BJ (cell line): ENCODE measurements at regions of chr7 and their contacts with region 1.

Region 1: GRCh38 chr7:132557489-132558044 is 18.7 kb downstream of the PLXNA4 start:
- DNase-seq: no peak
- H3K4me3 ChIP-seq: no peak overlapping the region
- H3K27me3 ChIP-seq: no peaks in the 10 kb centered on the region
- CTCF ChIP-seq: no peak

Region 2: DNA sequence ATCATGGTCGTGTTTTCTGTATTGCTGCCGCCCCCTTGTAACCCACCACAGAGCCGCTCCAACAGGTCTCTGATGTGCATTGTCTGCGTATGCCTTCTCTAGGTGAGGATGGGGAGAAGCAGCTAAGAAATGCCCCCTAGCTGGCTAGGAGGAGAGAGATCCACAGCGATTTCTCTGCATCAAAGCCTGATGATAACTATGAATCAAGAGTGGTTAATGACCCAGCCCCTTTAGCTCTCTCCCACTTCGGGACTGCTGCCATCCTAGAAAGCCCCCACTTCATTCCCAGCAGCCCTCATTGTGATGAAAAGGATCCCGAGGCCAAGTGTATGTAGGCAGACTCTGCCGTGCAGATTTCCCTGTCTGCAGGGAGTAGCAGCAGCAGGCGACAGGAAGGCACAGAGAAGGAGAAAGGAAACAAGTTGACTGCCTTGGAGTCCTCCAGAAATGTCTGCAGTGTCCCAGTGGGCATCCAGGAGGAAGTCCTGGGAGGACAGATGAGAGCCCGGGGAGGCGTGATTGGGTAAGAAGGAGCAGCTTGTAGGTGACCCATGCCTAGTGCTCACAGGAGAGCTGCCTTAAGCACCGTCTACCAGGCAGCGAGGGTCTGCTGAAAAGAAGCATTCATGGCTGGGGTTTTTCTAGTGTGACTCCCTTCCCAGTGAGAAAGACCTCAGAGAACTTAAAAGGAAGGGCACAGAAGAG is 15.8 kb after region 1 on chr7:
- CTCF ChIA-PET with region 1: no interaction called
- POLR2A ChIA-PET with region 1: no interaction called
- DNase-seq: no peak
- H3K4me3 ChIP-seq: no peak overlapping the region
- H3K27me3 ChIP-seq: peaks cover 44% of the 10 kb centered on the region
- CTCF ChIP-seq: no peak

Region 3: DNA sequence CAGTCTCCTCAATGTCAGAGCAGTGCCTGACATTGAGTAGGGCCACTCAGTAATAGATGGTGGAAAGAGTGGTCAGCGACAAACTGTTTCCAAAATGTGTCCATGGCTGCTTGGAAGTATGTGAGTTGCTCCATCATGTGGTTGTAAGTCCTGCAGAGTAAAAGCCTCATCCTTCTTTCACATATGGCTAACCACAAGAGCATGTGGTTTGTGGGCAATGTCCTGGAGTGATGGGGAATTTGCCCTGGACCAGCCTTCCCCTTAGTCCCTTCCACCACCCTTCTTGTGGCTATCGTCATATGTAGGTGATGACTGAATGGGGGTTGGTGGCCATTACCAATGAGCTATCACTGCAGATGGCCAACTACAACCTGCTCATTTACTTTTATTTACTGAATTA is 51.7 kb after region 1 on chr7:
- CTCF ChIA-PET with region 1: no interaction called
- POLR2A ChIA-PET with region 1: interaction called, 10 read pairs
- DNase-seq: no peak
- H3K4me3 ChIP-seq: no peak overlapping the region
- H3K27me3 ChIP-seq: no peaks in the 10 kb centered on the region
- CTCF ChIP-seq: no peak